ENCODE measurements at regions of chr17 and their contacts with region 1.

Region 1: GRCh38 chr17:17001874-17002520 is 30.1 kb upstream of the TNFRSF13B start:
- DNase-seq: peak; percentile 70 to 83
- ATAC-seq: peak; percentile 82 to 93 (median 86)
- H3K4me3 ChIP-seq: peak overlapping the region in 1 of 10 donors; percentile 15
- H3K27ac ChIP-seq: no peak overlapping the region
- H3K4me1 ChIP-seq: peaks cover 0 to 13% (median 0%) of the 10 kb centered on the region in 9 donors
- H3K27me3 ChIP-seq: no peaks in the 10 kb centered on the region
- CTCF ChIP-seq: peak; percentile 95 to 99 (median 98)

Region 2: GRCh38 chr17:17119533-17119932 is 117.5 kb after region 1 on chr17:
- intact Hi-C with region 1: loop called in 2 of 10 experiments (anchors 10 kb)
- DNase-seq: no peak
- ATAC-seq: peak in 7 of 8 donors; percentile 11 to 40 (median 25)
- H3K4me3 ChIP-seq: no peak overlapping the region
- H3K27ac ChIP-seq: peak overlapping the region; percentile 14 to 85 (median 72)
- H3K4me1 ChIP-seq: peaks cover 45 to 94% (median 76%) of the 10 kb centered on the region in 9 donors
- H3K27me3 ChIP-seq: no peaks in the 10 kb centered on the region
- CTCF ChIP-seq: no peak

Region 3: DNA sequence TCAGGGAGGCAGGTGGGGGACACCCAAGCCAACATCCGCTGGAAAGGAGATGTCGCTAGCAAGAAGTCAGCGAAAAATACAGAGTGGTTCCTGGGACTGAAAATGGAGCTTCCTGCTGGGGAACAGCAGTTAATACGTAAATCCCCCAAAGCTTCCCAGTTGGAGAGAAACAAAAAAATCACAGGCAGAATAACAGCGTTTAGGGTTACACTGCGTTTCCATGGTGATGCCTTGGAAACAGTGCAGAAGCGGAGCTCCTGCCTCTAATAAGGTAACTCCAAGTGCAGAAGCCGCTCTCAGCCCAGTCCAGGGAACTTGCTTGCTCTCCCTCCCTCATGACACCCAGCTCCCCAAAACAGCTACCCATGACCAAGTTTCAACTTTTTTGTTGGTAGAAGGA is 130.7 kb after region 1 on chr17:
- intact Hi-C with region 1: loop called in 2 of 10 experiments (anchors 5 to 10 kb)
- DNase-seq: no peak
- ATAC-seq: no peak
- H3K4me3 ChIP-seq: no peak overlapping the region
- H3K27ac ChIP-seq: no peak overlapping the region
- H3K4me1 ChIP-seq: peaks cover 0 to 52% (median 16%) of the 10 kb centered on the region in 9 donors
- H3K27me3 ChIP-seq: no peaks in the 10 kb centered on the region
- CTCF ChIP-seq: no peak

Region 4: GRCh38 chr17:17151962-17152361 is 150.0 kb after region 1 on chr17:
- intact Hi-C with region 1: loop called in 4 of 10 experiments (anchors 5 to 10 kb)
- DNase-seq: peak; percentile 85
- ATAC-seq: peak; percentile 86 to 97 (median 94)
- H3K4me3 ChIP-seq: no peak overlapping the region
- H3K27ac ChIP-seq: peak overlapping the region; percentile 60 to 83 (median 68)
- H3K4me1 ChIP-seq: peaks cover 13 to 53% (median 35%) of the 10 kb centered on the region in 9 donors
- H3K27me3 ChIP-seq: no peaks in the 10 kb centered on the region
- CTCF ChIP-seq: no peak

Region 5: GRCh38 chr17:17237026-17237799 is 235.2 kb after region 1 on chr17 and contains the start of gene FLCN:
- intact Hi-C with region 1: loop called in 6 of 10 experiments (anchors 2 to 10 kb)
- DNase-seq: peak; percentile 92 to 94
- ATAC-seq: peak; percentile 94 to 98 (median 96)
- H3K4me3 ChIP-seq: peak within 1 kb of the TSS; percentile 85 to 100 (median 94)
- H3K27ac ChIP-seq: peak within 1 kb of the TSS; percentile 88 to 99 (median 98)
- H3K4me1 ChIP-seq: peaks cover 2 to 46% (median 34%) of the 10 kb centered on the region in 9 donors
- H3K27me3 ChIP-seq: no peaks in the 10 kb centered on the region
- CTCF ChIP-seq: no peak
- total RNA-seq, gene FLCN: 26.4 to 45.7 (median 35.8) TPM

Region 6: GRCh38 chr17:17313350-17313991 is 311.5 kb after region 1 on chr17:
- intact Hi-C with region 1: loop called in 7 of 10 experiments (anchors 2 to 10 kb)
- DNase-seq: peak; percentile 19 to 39
- ATAC-seq: peak in 6 of 8 donors; percentile 43 to 65 (median 64)
- H3K4me3 ChIP-seq: no peak overlapping the region
- H3K27ac ChIP-seq: no peak overlapping the region
- H3K4me1 ChIP-seq: no peaks in the 10 kb centered on the region
- H3K27me3 ChIP-seq: no peaks in the 10 kb centered on the region
- CTCF ChIP-seq: peak; percentile 16 to 64 (median 53)

Measured in heart right ventricle (tissue), 16 donors.